CD4-positive, alpha-beta memory T cell (primary cell): ENCODE measurements at regions of chr1 and their contacts with region 1.

Region 1: GRCh38 chr1:45339789-45340570 is at the starts of genes MUTYH and TOE1:
- DNase-seq: peak; percentile 89 to 92 (median 90)
- H3K4me3 ChIP-seq: peak within 1 kb of the TSS; percentile 84 to 91
- H3K4me3 Mint-ChIP-seq: peak within 1 kb of the TSS; percentile 98 to 100 (median 100)
- H3K27ac ChIP-seq: peak within 1 kb of the TSS; percentile 93
- H3K27ac Mint-ChIP-seq: peak within 1 kb of the TSS; percentile 96 to 100 (median 99)
- H3K4me1 ChIP-seq: peaks cover 46% of the 10 kb centered on the region
- H3K4me1 Mint-ChIP-seq: peaks cover 31 to 75% (median 51%) of the 10 kb centered on the region in 4 donors
- H3K27me3 ChIP-seq: no peaks in the 10 kb centered on the region
- H3K27me3 Mint-ChIP-seq: no peaks in the 10 kb centered on the region
- total RNA-seq, gene MUTYH: 70.0 to 72.1 TPM
- total RNA-seq, gene TOE1: 18.2 to 18.9 TPM

Region 2: GRCh38 chr1:44730741-44731512 is 609.1 kb before region 1 on chr1 and contains the start of gene RNU5D-1:
- CTCF ChIA-PET with region 1: interaction called, 7 read pairs
- POLR2A ChIA-PET with region 1: interaction called, 12 read pairs
- intact Hi-C with region 1: no loop called
- DNase-seq: peak; percentile 90 to 94 (median 91)
- H3K4me3 ChIP-seq: peak within 1 kb of the TSS; percentile 31 to 39
- H3K4me3 Mint-ChIP-seq: peak within 1 kb of the TSS; percentile 54 to 93 (median 84)
- H3K27ac ChIP-seq: peak within 1 kb of the TSS; percentile 96
- H3K27ac Mint-ChIP-seq: peak within 1 kb of the TSS; percentile 97 to 100 (median 99)
- H3K4me1 ChIP-seq: peaks cover 22% of the 10 kb centered on the region
- H3K4me1 Mint-ChIP-seq: peaks cover 18 to 38% (median 24%) of the 10 kb centered on the region in 4 donors
- H3K27me3 ChIP-seq: no peaks in the 10 kb centered on the region
- H3K27me3 Mint-ChIP-seq: no peaks in the 10 kb centered on the region
- total RNA-seq, gene RNU5D-1: not detected

Region 3: DNA sequence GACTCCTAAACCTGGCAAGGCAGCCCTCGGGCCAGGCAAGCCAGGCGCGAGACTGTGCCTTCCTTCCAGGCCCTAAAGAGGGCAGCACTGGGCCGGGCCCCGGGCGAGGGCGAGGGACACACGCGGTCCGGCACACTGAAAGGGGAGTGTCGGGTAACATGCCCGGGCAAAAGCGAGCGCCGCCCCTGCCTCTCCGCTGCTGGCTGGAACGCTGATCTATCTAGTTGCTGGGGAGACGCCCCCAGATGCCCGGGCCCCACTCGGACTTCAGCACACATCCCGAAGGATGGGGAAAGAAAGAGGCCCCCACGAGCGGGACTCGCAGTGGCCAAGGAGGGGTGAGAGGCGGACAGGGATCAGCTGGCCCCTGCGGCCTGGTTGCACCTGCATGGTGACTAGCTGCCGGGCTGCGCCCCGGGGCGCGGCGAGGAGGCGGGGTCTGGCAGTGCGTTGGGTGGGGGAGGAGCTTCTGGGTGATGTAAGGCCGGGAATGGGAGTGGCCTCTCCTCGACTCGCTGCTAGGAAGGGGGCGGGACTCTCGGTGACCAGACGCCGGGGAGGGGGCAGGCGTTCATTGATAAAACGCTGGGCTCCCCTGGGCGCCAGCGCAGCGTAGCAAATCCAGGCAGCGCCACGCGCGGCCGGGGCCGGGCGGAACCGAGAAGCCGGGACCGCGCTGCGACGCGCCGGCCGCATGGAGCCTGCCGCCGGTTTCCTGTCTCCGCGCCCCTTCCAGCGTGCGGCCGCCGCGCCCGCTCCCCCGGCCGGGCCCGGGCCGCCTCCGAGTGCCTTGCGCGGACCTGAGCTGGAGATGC is 540.0 kb before region 1 on chr1 and contains the start of gene PLK3:
- CTCF ChIA-PET with region 1: no interaction called
- POLR2A ChIA-PET with region 1: interaction called, 10 read pairs
- intact Hi-C with region 1: no loop called
- DNase-seq: peak; percentile 99 to 100 (median 99)
- H3K4me3 ChIP-seq: peak within 1 kb of the TSS; percentile 77 to 83
- H3K4me3 Mint-ChIP-seq: peak within 1 kb of the TSS; percentile 89 to 99 (median 96)
- H3K27ac ChIP-seq: peak within 1 kb of the TSS; percentile 96
- H3K27ac Mint-ChIP-seq: peak within 1 kb of the TSS; percentile 82 to 100 (median 99)
- H3K4me1 ChIP-seq: peaks cover 37% of the 10 kb centered on the region
- H3K4me1 Mint-ChIP-seq: peaks cover 23 to 48% (median 31%) of the 10 kb centered on the region in 4 donors
- H3K27me3 ChIP-seq: no peaks in the 10 kb centered on the region
- H3K27me3 Mint-ChIP-seq: no peaks in the 10 kb centered on the region
- total RNA-seq, gene PLK3: 151 to 153 TPM

Region 4: GRCh38 chr1:45326627-45327623 is 13.1 kb before region 1 on chr1 and contains the start of gene HPDL:
- CTCF ChIA-PET with region 1: interaction called, 5 read pairs
- POLR2A ChIA-PET with region 1: interaction called, 58 read pairs
- intact Hi-C with region 1: loop called (anchors 1 kb)
- DNase-seq: peak; percentile 25 to 53 (median 36)
- H3K4me3 ChIP-seq: peak within 1 kb of the TSS; percentile 42 to 54
- H3K4me3 Mint-ChIP-seq: peak within 1 kb of the TSS; percentile 74 to 89 (median 82)
- H3K27ac ChIP-seq: peak within 1 kb of the TSS; percentile 31
- H3K27ac Mint-ChIP-seq: peak within 1 kb of the TSS in 5 of 7 donors; percentile 21 to 71 (median 62)
- H3K4me1 ChIP-seq: peaks cover 13% of the 10 kb centered on the region
- H3K4me1 Mint-ChIP-seq: peaks cover 3 to 26% (median 4%) of the 10 kb centered on the region in 4 donors
- H3K27me3 ChIP-seq: no peaks in the 10 kb centered on the region
- H3K27me3 Mint-ChIP-seq: no peaks in the 10 kb centered on the region
- total RNA-seq, gene HPDL: 0.19 to 0.32 TPM

Region 5: DNA sequence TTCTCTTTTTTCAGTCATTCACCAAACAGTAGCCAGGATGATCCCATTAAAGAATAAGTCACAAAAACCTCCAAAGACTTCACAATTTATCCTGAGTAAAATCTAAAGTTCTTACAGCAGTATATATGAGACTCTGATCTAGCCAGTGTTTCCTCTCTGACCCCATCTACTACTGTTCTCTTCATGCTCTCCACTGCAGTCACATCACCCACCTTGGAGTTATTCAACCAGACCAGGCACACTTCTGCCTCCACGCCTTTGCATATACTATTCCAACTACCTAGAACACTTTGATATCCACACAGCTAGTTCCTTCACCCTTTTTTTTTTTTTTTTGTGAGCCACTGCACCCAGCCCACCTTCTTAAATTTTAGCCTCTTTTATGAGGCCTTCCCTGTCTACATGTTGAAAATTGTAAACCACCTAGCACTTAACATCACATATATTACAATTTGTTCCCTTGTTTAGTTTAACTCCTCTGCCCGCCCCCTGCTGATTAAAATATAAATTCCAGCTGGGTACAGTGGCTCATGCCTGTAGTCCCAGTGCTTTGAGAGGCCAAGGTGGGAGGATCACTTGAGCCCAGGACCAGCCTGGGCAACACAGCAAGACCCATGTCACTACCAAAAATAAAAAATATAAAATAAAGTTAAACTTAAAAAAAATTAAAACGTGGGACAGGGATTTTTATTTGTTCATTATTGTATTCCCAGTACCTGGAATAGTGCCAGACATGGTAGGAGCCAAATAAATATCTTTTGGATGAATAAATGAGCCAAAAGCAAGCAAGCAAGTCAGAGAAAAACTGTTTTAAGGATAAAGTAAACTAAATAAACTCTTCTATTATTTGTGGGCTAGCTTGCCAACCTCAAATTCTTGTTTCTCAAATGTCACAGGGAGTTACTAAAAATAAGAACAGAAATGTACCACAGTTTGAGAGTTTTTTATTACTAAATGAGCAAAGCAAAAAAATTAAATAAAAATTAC is 35.4 kb after region 1 on chr1:
- CTCF ChIA-PET with region 1: no interaction called
- POLR2A ChIA-PET with region 1: no interaction called
- intact Hi-C with region 1: no loop called
- DNase-seq: no peak
- H3K4me3 ChIP-seq: no peak overlapping the region
- H3K4me3 Mint-ChIP-seq: no peak overlapping the region
- H3K27ac ChIP-seq: no peak overlapping the region
- H3K27ac Mint-ChIP-seq: peak overlapping the region in 2 of 7 donors; percentile 3 to 18
- H3K4me1 ChIP-seq: no peaks in the 10 kb centered on the region
- H3K4me1 Mint-ChIP-seq: peaks cover 0 to 5% (median 2%) of the 10 kb centered on the region in 4 donors
- H3K27me3 ChIP-seq: no peaks in the 10 kb centered on the region
- H3K27me3 Mint-ChIP-seq: no peaks in the 10 kb centered on the region

Region 6: GRCh38 chr1:45521398-45522323 is 181.7 kb after region 1 on chr1 and contains the start of gene PRDX1:
- CTCF ChIA-PET with region 1: no interaction called
- POLR2A ChIA-PET with region 1: interaction called, 32 read pairs
- intact Hi-C with region 1: no loop called
- DNase-seq: peak; percentile 95
- H3K4me3 ChIP-seq: peak within 1 kb of the TSS; percentile 90 to 94
- H3K4me3 Mint-ChIP-seq: peak within 1 kb of the TSS; percentile 93 to 97 (median 96)
- H3K27ac ChIP-seq: peak within 1 kb of the TSS; percentile 87
- H3K27ac Mint-ChIP-seq: peak within 1 kb of the TSS; percentile 85 to 97 (median 93)
- H3K4me1 ChIP-seq: peaks cover 25% of the 10 kb centered on the region
- H3K4me1 Mint-ChIP-seq: peaks cover 17 to 41% (median 29%) of the 10 kb centered on the region in 4 donors
- H3K27me3 ChIP-seq: no peaks in the 10 kb centered on the region
- H3K27me3 Mint-ChIP-seq: no peaks in the 10 kb centered on the region
- total RNA-seq, gene PRDX1: 130 to 145 TPM

Region 7: DNA sequence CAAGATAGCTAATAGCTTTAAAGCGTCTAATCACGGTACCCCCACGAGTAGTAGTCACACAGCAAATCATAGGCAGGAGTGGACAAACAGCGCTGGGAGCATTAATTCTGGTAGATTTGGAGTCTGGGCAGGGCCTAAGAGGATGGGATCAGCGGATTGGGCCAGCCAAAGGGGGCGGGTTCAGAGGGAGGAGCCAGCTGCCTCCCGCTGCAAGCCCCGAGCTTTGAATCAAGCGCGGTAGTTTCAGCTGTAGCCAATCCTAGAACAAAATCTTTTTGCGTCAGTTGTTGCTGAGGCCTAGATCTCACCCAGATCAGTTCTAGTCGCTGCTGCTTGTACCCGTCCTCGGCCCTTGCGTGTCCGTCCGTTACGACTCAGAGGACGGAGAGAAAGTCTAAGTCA is 243.3 kb after region 1 on chr1:
- CTCF ChIA-PET with region 1: interaction called, 4 read pairs
- POLR2A ChIA-PET with region 1: interaction called, 28 read pairs
- intact Hi-C with region 1: loop called (anchors 1 kb)
- DNase-seq: peak; percentile 95 to 97 (median 96)
- H3K4me3 ChIP-seq: peak overlapping the region; percentile 99
- H3K4me3 Mint-ChIP-seq: peak overlapping the region; percentile 93 to 100 (median 100)
- H3K27ac ChIP-seq: peak overlapping the region; percentile 88
- H3K27ac Mint-ChIP-seq: peak overlapping the region; percentile 94 to 100 (median 99)
- H3K4me1 ChIP-seq: peaks cover 26% of the 10 kb centered on the region
- H3K4me1 Mint-ChIP-seq: peaks cover 20 to 42% (median 28%) of the 10 kb centered on the region in 4 donors
- H3K27me3 ChIP-seq: no peaks in the 10 kb centered on the region
- H3K27me3 Mint-ChIP-seq: no peaks in the 10 kb centered on the region